Gastrocnemius medialis (tissue), 4 donors: ENCODE measurements at regions of chr3 and their contacts with region 1.

Region 1: GRCh38 chr3:148379763-148380382 is 317.8 kb upstream of the AGTR1 start:
- DNase-seq: no peak
- ATAC-seq: peak; percentile 62 to 77
- H3K4me3 ChIP-seq: no peak overlapping the region
- H3K27ac ChIP-seq: no peak overlapping the region
- H3K4me1 ChIP-seq: no peaks in the 10 kb centered on the region
- H3K27me3 ChIP-seq: no peaks in the 10 kb centered on the region
- CTCF ChIP-seq: peak in 4 of 5 experiments; percentile 22 to 36 (median 29)
- POLR2A ChIP-seq: no peak

Region 2: DNA sequence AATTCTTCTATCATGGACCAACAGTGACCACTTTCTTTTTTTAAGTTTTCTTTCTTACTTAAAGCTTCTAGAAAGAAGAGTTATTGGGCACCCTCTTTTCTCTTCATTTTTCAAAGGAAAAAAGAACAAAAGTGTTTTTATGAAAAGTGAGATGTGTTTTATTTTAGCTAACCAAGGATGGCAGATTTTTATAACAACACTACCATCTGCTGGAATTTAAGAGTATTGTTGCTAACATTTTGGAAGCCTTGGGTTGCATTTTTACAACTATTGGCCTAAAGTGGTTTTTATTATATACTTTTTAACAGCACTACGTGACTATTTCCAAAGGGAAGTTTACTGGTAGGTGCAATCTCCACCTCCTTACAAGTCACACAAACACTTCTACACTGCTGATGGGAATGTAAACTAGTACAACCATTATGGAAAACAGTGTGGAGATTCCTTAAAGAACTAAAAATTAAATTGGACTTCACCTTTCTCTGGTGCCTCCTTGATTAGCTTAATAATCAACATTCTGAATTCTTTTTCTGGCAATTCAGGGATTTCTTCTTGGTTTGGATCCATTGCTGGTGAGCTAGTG is 80.1 kb after region 1 on chr3:
- in situ Hi-C with region 1: no loop called
- intact Hi-C with region 1: loop called (anchors 5 kb)
- DNase-seq: no peak
- ATAC-seq: no peak
- H3K4me3 ChIP-seq: no peak overlapping the region
- H3K27ac ChIP-seq: no peak overlapping the region
- H3K4me1 ChIP-seq: no peaks in the 10 kb centered on the region
- H3K27me3 ChIP-seq: no peaks in the 10 kb centered on the region
- CTCF ChIP-seq: peak; percentile 14 to 35 (median 28)
- POLR2A ChIP-seq: no peak

Region 3: GRCh38 chr3:148718982-148719862 is 339.3 kb after region 1 on chr3:
- in situ Hi-C with region 1: loop called in 2 of 4 experiments (anchors 5 to 25 kb)
- intact Hi-C with region 1: loop called (anchors 10 kb)
- DNase-seq: no peak
- ATAC-seq: no peak
- H3K4me3 ChIP-seq: no peak overlapping the region
- H3K27ac ChIP-seq: no peak overlapping the region
- H3K4me1 ChIP-seq: peaks cover 0 to 3% of the 10 kb centered on the region in 2 donors
- H3K27me3 ChIP-seq: no peaks in the 10 kb centered on the region
- CTCF ChIP-seq: peak in 2 of 5 experiments; percentile 18 to 44
- POLR2A ChIP-seq: no peak

Region 4: GRCh38 chr3:148727247-148727646 is 347.4 kb after region 1 on chr3:
- in situ Hi-C with region 1: loop called in 1 of 4 experiments (anchors 25 kb)
- intact Hi-C with region 1: loop called (anchors 10 kb)
- DNase-seq: no peak
- ATAC-seq: no peak
- H3K4me3 ChIP-seq: no peak overlapping the region
- H3K27ac ChIP-seq: no peak overlapping the region
- H3K4me1 ChIP-seq: no peaks in the 10 kb centered on the region
- H3K27me3 ChIP-seq: no peaks in the 10 kb centered on the region
- CTCF ChIP-seq: peak in 1 of 5 experiments; percentile 30
- POLR2A ChIP-seq: no peak

Region 5: DNA sequence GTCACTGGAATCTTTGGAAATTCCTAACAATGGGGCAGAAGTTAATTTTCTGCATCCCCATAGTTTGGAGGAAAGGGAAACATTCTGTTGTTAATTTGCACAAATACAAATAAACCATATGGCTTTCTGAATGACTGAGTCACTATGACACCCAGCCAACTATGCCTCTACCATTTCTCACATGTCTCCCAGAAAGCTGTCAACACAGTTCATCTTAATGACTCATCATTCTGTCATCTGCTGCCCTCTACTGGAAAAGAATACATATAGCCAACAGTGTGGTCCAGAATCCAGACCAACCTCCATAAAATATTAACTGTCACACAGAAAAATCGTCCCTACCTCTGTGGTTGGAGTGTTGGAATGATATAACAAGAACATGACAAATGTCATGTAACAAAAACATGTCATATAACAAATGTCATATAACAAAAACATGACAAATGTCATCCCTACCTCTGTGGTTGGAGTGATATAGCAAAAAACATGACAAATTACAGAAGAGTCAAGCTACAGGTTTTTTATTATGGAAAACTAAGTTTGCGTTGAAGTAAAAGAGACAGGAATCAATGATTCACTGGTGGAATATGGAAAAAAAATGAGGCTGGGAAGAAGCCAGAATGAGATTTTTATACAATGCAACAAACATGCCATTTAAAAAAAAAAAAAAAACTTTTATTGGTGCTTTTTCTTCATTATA is 563.8 kb after region 1 on chr3:
- in situ Hi-C with region 1: loop called in 3 of 4 experiments (anchors 5 to 25 kb)
- intact Hi-C with region 1: loop called (anchors 5 kb)
- DNase-seq: peak; percentile 53 to 54
- ATAC-seq: peak; percentile 99 to 100
- H3K4me3 ChIP-seq: no peak overlapping the region
- H3K27ac ChIP-seq: peak overlapping the region in 1 of 4 donors; percentile 7
- H3K4me1 ChIP-seq: peaks cover 0 to 8% of the 10 kb centered on the region in 2 donors
- H3K27me3 ChIP-seq: no peaks in the 10 kb centered on the region
- CTCF ChIP-seq: peak; percentile 71 to 77 (median 76)
- POLR2A ChIP-seq: no peak